CD14-positive monocyte (primary cell): ENCODE measurements at regions of chr20 and their contacts with region 1.

Region 1: DNA sequence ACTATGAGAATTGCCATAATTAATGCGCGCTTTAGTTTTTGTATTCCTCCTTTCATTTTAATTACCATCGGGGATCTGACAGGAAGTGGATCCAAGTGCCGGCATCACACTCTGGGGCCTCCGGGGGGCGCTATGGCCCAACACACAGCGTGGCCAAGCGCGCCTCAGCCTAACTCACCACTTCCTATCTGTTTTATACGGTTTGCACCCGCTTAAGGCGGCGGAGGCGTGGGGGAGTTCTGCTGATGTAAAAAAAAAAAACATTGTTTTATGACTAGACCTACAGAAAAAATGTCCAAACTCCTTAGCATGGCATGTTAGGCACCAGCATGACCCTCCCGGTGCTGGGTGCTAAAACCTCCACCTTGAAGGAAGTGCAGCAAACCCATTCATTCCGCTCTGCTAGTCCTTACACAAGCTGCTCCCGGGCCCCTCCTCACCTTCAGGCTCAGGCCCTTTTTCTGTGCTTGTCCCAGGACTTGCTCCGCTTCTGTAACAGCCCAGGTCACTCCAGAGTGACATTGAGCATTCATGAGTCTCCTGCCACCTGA is 4.5 kb upstream of the EBF4 start:
- DNase-seq: peak; percentile 38 to 55 (median 47)
- H3K4me3 ChIP-seq: no peak overlapping the region
- H3K4me3 Mint-ChIP-seq: peak overlapping the region in 1 of 2 donors; percentile 67
- H3K27ac ChIP-seq: no peak overlapping the region
- H3K27ac Mint-ChIP-seq: peak overlapping the region in 1 of 7 donors; percentile 37
- H3K4me1 ChIP-seq: peaks cover 13 to 22% of the 10 kb centered on the region in 2 donors
- H3K4me1 Mint-ChIP-seq: peaks cover 18% of the 10 kb centered on the region
- H3K27me3 ChIP-seq: peaks cover 22 to 44% of the 10 kb centered on the region in 2 donors
- H3K27me3 Mint-ChIP-seq: peaks cover 55 to 59% (median 58%) of the 10 kb centered on the region in 3 donors
- CTCF ChIP-seq: peak; percentile 79

Region 2: DNA sequence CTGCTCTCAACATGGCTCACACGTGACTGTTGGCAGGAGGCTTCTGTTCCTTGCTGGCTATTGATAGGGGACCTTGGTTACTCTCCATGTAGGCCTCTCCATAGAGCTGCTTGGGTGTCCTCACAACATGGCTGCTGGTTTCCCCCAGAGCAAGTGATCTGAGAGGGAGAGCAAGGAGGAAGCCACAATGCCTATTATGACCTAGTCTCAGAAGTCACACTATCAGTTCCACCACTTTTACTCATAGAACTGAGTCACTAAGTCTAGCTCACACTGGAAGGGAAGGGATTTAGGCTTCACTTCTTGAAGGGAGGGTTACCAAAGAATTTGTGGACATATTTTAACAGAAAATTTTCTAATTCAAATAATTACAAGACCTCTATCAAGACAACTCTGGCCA is 44.4 kb before region 1 on chr20:
- intact Hi-C with region 1: no loop called
- DNase-seq: no peak
- H3K4me3 ChIP-seq: no peak overlapping the region
- H3K4me3 Mint-ChIP-seq: no peak overlapping the region
- H3K27ac ChIP-seq: no peak overlapping the region
- H3K27ac Mint-ChIP-seq: no peak overlapping the region
- H3K4me1 ChIP-seq: no peaks in the 10 kb centered on the region
- H3K4me1 Mint-ChIP-seq: no peaks in the 10 kb centered on the region
- H3K27me3 ChIP-seq: no peaks in the 10 kb centered on the region
- H3K27me3 Mint-ChIP-seq: peaks cover 0 to 4% (median 0%) of the 10 kb centered on the region in 3 donors
- CTCF ChIP-seq: no peak

Region 3: GRCh38 chr20:2742934-2743559 is 54.9 kb after region 1 on chr20:
- intact Hi-C with region 1: loop called in 1 of 2 experiments (anchors 5 kb)
- DNase-seq: peak; percentile 39 to 60 (median 51)
- H3K4me3 ChIP-seq: no peak overlapping the region
- H3K4me3 Mint-ChIP-seq: peak overlapping the region; percentile 24 to 42
- H3K27ac ChIP-seq: no peak overlapping the region
- H3K27ac Mint-ChIP-seq: no peak overlapping the region
- H3K4me1 ChIP-seq: no peaks in the 10 kb centered on the region
- H3K4me1 Mint-ChIP-seq: peaks cover 4% of the 10 kb centered on the region
- H3K27me3 ChIP-seq: peaks cover 0 to 5% of the 10 kb centered on the region in 2 donors
- H3K27me3 Mint-ChIP-seq: peaks cover 24 to 44% (median 29%) of the 10 kb centered on the region in 3 donors
- CTCF ChIP-seq: peak; percentile 89

Region 4: DNA sequence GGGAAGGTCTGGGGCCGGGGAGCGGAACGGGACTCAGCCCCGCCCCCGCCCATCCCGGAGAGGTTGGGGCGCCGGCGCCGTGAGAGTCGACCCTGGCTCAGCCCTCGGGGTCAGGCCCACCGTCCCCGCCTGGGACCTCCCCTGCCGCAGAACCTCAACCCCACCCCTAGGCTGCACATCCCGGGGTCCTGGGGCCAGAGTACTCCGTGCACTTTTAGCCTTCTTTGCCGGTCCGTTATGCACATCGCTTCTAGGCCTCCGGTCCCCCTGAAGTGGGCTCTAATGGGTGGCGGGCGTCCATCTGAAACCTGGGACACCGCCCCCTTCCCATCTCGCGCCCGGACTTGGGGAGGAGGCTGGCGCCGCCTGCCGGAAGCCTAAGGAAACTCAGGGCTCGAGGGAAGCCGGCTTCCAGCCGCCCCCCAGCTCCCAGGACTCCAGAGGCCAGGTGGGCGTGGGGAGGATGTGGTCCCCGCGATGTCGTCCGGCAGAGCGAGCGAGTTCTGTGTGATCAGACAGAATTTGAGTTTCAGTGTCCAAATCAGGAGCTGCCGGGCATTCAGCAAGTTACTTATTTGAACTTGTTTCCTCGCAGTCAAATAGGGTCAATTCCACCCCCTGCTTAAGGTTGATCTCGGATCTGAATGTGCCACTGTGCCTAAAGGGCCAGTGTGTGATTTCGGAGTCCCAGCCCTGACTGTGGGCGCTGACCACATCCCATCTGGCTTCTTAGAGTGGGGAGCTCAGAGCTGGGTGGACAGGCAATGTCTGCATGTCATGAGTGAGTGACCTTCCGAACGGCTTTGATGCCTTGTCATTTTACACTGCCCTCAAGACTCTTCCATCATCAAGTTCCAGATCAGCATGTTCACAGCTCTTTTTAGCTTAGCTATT is 64.7 kb after region 1 on chr20:
- intact Hi-C with region 1: loop called in 1 of 2 experiments (anchors 5 kb)
- DNase-seq: peak; percentile 10 to 37 (median 28)
- H3K4me3 ChIP-seq: peak overlapping the region; percentile 26 to 75 (median 30)
- H3K4me3 Mint-ChIP-seq: peak overlapping the region; percentile 77 to 90
- H3K27ac ChIP-seq: no peak overlapping the region
- H3K27ac Mint-ChIP-seq: no peak overlapping the region
- H3K4me1 ChIP-seq: peaks cover 27 to 33% of the 10 kb centered on the region in 2 donors
- H3K4me1 Mint-ChIP-seq: peaks cover 25% of the 10 kb centered on the region
- H3K27me3 ChIP-seq: peaks cover 18 to 56% of the 10 kb centered on the region in 2 donors
- H3K27me3 Mint-ChIP-seq: peaks cover 48 to 87% (median 48%) of the 10 kb centered on the region in 3 donors
- CTCF ChIP-seq: peak; percentile 80

Region 5: GRCh38 chr20:2991532-2991931 is 303.4 kb after region 1 on chr20:
- intact Hi-C with region 1: loop called in 1 of 2 experiments (anchors 10 kb)
- DNase-seq: no peak
- H3K4me3 ChIP-seq: no peak overlapping the region
- H3K4me3 Mint-ChIP-seq: no peak overlapping the region
- H3K27ac ChIP-seq: no peak overlapping the region
- H3K27ac Mint-ChIP-seq: peak overlapping the region in 1 of 7 donors; percentile 47
- H3K4me1 ChIP-seq: peaks cover 12 to 18% of the 10 kb centered on the region in 2 donors
- H3K4me1 Mint-ChIP-seq: peaks cover 7% of the 10 kb centered on the region
- H3K27me3 ChIP-seq: no peaks in the 10 kb centered on the region
- H3K27me3 Mint-ChIP-seq: no peaks in the 10 kb centered on the region
- CTCF ChIP-seq: no peak

Region 6: GRCh38 chr20:3032624-3033023 is 344.5 kb after region 1 on chr20:
- intact Hi-C with region 1: no loop called
- DNase-seq: no peak
- H3K4me3 ChIP-seq: no peak overlapping the region
- H3K4me3 Mint-ChIP-seq: no peak overlapping the region
- H3K27ac ChIP-seq: no peak overlapping the region
- H3K27ac Mint-ChIP-seq: no peak overlapping the region
- H3K4me1 ChIP-seq: no peaks in the 10 kb centered on the region
- H3K4me1 Mint-ChIP-seq: no peaks in the 10 kb centered on the region
- H3K27me3 ChIP-seq: no peaks in the 10 kb centered on the region
- H3K27me3 Mint-ChIP-seq: no peaks in the 10 kb centered on the region
- CTCF ChIP-seq: no peak